Calu3 (cell line): ENCODE measurements at regions of chr1 and their contacts with region 1.

Region 1: DNA sequence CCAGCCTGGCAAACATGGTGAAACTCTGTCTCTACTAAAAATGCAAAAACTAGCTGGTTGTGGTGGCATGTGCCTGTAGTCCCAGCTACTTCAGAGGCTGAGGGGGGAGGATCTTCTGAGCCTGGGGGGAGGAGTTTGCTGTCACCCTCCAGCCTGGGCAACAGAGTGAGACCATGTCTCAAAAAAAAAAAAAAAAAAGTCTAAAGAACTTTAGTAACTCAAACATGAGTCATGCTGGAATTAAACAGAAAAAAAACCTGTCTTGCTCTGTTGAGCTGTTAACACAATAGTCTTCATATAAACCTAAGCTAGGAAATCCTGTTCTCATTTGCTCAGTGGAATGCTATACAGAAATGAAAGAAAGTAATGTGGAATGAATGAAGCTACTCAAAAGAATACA is 16.7 kb upstream of the DISP1 start:
- DNase-seq: peak; percentile 58
- H3K4me3 Mint-ChIP-seq: no peak overlapping the region
- H3K27ac Mint-ChIP-seq: no peak overlapping the region
- H3K4me1 Mint-ChIP-seq: peaks cover 11% of the 10 kb centered on the region
- H3K27me3 Mint-ChIP-seq: no peaks in the 10 kb centered on the region
- CTCF ChIP-seq: no peak

Region 2: GRCh38 chr1:222829868-222830267 is 31.8 kb after region 1 on chr1:
- CTCF ChIA-PET with region 1: no interaction called
- intact Hi-C with region 1: loop called (anchors 1 kb)
- DNase-seq: no peak
- H3K4me3 Mint-ChIP-seq: no peak overlapping the region
- H3K27ac Mint-ChIP-seq: peak overlapping the region; percentile 2
- H3K4me1 Mint-ChIP-seq: no peaks in the 10 kb centered on the region
- H3K27me3 Mint-ChIP-seq: no peaks in the 10 kb centered on the region
- CTCF ChIP-seq: no peak

Region 3: GRCh38 chr1:222928212-222928611 is 130.1 kb after region 1 on chr1:
- CTCF ChIA-PET with region 1: no interaction called
- intact Hi-C with region 1: no loop called
- DNase-seq: no peak
- H3K4me3 Mint-ChIP-seq: no peak overlapping the region
- H3K27ac Mint-ChIP-seq: no peak overlapping the region
- H3K4me1 Mint-ChIP-seq: no peaks in the 10 kb centered on the region
- H3K27me3 Mint-ChIP-seq: no peaks in the 10 kb centered on the region
- CTCF ChIP-seq: no peak

Region 4: GRCh38 chr1:222994506-222995235 is 196.6 kb after region 1 on chr1:
- CTCF ChIA-PET with region 1: no interaction called
- intact Hi-C with region 1: loop called (anchors 2 kb)
- DNase-seq: no peak
- H3K4me3 Mint-ChIP-seq: no peak overlapping the region
- H3K27ac Mint-ChIP-seq: peak overlapping the region; percentile 75
- H3K4me1 Mint-ChIP-seq: peaks cover 27% of the 10 kb centered on the region
- H3K27me3 Mint-ChIP-seq: no peaks in the 10 kb centered on the region
- CTCF ChIP-seq: no peak

Region 5: DNA sequence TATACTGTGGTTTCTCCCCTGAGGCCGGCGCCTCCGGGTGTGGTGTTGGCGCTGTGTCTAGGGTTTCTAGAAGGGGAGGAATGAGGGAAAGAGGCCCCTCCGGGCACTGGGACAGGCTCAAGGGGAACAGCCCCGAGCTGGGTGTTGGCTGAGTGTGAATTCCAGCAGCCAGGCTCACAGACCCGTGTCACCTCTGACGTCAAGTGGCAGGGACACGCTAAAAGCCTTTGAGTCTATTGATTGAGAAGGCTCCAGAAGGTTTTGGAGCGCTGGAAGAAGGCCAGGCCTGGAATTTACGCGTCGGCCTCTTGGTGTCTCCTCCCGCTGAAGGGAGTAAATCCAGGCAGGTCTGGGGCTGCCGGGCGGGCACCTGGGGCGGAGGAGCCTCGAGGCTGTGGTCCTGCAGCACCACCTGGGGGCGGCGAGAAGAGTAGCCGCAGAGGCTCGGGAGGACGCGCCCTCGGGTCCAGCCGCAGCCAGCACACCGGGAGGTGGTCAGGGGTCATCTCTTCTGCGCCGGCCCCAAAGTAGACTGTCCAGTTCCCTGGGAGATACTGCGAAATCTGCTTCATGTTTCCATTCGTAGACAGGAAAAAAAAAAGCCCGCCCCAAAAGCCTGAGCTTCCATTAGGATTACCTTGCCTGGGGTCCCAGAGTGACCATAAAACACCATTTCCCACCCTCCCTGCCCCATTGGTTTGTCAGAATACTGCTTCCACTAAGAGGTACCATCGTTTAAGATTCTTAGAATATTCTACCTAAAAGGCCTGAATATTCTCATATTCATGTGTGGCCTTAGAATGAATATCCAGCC is 283.3 kb after region 1 on chr1:
- CTCF ChIA-PET with region 1: interaction called, 11 read pairs
- intact Hi-C with region 1: no loop called
- DNase-seq: peak; percentile 98
- H3K4me3 Mint-ChIP-seq: peak overlapping the region; percentile 51
- H3K27ac Mint-ChIP-seq: peak overlapping the region; percentile 84
- H3K4me1 Mint-ChIP-seq: peaks cover 5% of the 10 kb centered on the region
- H3K27me3 Mint-ChIP-seq: peaks cover 21% of the 10 kb centered on the region
- CTCF ChIP-seq: peak; percentile 95

Region 6: GRCh38 chr1:223087291-223088255 is 289.5 kb after region 1 on chr1:
- CTCF ChIA-PET with region 1: interaction called, 10 read pairs
- intact Hi-C with region 1: no loop called
- DNase-seq: no peak
- H3K4me3 Mint-ChIP-seq: no peak overlapping the region
- H3K27ac Mint-ChIP-seq: no peak overlapping the region
- H3K4me1 Mint-ChIP-seq: no peaks in the 10 kb centered on the region
- H3K27me3 Mint-ChIP-seq: peaks cover 27% of the 10 kb centered on the region
- CTCF ChIP-seq: no peak